Naive thymus-derived CD4-positive, alpha-beta T cell (primary cell): ENCODE measurements at regions of chr3 and their contacts with region 1.

Region 1: GRCh38 chr3:177597311-177598096 is 400.2 kb upstream of the TBL1XR1 start:
- DNase-seq: peak in 7 of 9 donors; percentile 36 to 75 (median 65)
- ATAC-seq: peak; percentile 93
- H3K4me3 ChIP-seq: peak overlapping the region; percentile 21
- H3K4me3 Mint-ChIP-seq: peak overlapping the region; percentile 51 to 80 (median 72)
- H3K27ac ChIP-seq: peak overlapping the region; percentile 54
- H3K27ac Mint-ChIP-seq: peak overlapping the region; percentile 77 to 97 (median 91)
- H3K4me1 ChIP-seq: peaks cover 39 to 50% of the 10 kb centered on the region in 2 donors
- H3K4me1 Mint-ChIP-seq: peaks cover 51 to 87% (median 83%) of the 10 kb centered on the region in 7 donors
- H3K27me3 ChIP-seq: no peaks in the 10 kb centered on the region
- H3K27me3 Mint-ChIP-seq: no peaks in the 10 kb centered on the region

Region 2: GRCh38 chr3:177057768-177058167 is 539.7 kb before region 1 on chr3:
- CTCF ChIA-PET with region 1: no interaction called
- POLR2A ChIA-PET with region 1: no interaction called
- intact Hi-C with region 1: loop called (anchors 5 kb)
- DNase-seq: peak in 7 of 9 donors; percentile 16 to 40 (median 22)
- ATAC-seq: peak; percentile 84
- H3K4me3 ChIP-seq: peak overlapping the region; percentile 23
- H3K4me3 Mint-ChIP-seq: no peak overlapping the region
- H3K27ac ChIP-seq: no peak overlapping the region
- H3K27ac Mint-ChIP-seq: no peak overlapping the region
- H3K4me1 ChIP-seq: peaks cover 10 to 20% of the 10 kb centered on the region in 2 donors
- H3K4me1 Mint-ChIP-seq: peaks cover 5 to 43% (median 31%) of the 10 kb centered on the region in 7 donors
- H3K27me3 ChIP-seq: no peaks in the 10 kb centered on the region
- H3K27me3 Mint-ChIP-seq: no peaks in the 10 kb centered on the region

Region 3: GRCh38 chr3:177426878-177427495 is 170.5 kb before region 1 on chr3:
- CTCF ChIA-PET with region 1: no interaction called
- POLR2A ChIA-PET with region 1: no interaction called
- intact Hi-C with region 1: loop called in 1 of 2 experiments (anchors 10 kb)
- DNase-seq: peak in 6 of 9 donors; percentile 5 to 50 (median 19)
- ATAC-seq: peak; percentile 88
- H3K4me3 ChIP-seq: peak overlapping the region; percentile 7
- H3K4me3 Mint-ChIP-seq: peak overlapping the region; percentile 14 to 77 (median 47)
- H3K27ac ChIP-seq: no peak overlapping the region
- H3K27ac Mint-ChIP-seq: peak overlapping the region; percentile 3 to 85 (median 52)
- H3K4me1 ChIP-seq: peaks cover 7 to 17% of the 10 kb centered on the region in 2 donors
- H3K4me1 Mint-ChIP-seq: peaks cover 13 to 38% (median 23%) of the 10 kb centered on the region in 7 donors
- H3K27me3 ChIP-seq: no peaks in the 10 kb centered on the region
- H3K27me3 Mint-ChIP-seq: peaks cover 0 to 12% (median 0%) of the 10 kb centered on the region in 5 donors

Region 4: DNA sequence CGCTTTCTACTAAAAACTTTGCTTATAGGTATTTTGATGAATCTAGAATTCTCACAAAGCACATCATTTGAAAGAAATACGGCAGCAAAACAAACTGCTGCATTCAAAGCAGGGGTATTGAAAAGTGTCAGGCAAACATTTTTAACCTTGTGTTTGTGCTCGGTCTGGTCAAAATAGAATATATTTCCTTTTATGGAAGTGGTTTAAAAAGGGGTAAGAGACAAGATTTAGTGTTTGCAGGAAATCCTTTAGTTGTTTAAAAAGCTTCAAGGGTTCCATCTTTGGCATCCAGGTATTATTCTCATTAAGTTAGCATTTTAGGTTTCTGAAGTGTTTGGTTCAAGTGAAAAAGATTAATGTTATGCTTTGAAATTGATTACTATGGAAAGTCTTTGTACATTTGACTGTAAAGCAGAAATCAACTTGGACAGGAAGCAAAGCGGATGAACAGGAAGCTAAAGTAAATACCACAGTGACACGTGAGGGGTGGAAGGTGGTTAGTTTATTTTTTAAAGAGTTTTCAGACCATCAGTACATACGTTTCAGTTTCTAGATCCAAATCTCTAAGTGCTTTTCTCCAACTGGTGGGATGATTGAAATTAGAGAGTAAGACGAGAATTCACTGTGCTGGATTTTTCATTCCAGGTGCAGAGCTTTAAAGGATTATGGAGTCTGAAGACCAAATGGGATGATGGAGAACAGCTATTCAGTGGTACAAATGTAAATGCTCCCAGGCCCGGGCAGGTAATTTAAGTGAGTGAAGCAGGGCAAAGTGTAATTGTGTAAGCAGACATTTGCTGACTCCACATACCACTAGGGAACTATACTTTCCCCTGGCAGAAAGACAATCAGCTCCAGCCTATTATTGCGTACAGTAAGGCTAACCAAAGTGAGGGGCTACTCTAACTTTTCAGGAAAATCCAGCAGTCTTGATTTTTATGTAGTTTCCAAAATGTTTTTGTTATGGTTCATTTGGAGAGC is 58.5 kb before region 1 on chr3:
- CTCF ChIA-PET with region 1: no interaction called
- POLR2A ChIA-PET with region 1: interaction called, 7 read pairs
- intact Hi-C with region 1: loop called in 1 of 2 experiments (anchors 2 kb)
- DNase-seq: peak in 6 of 9 donors; percentile 15 to 52 (median 40)
- ATAC-seq: peak; percentile 74
- H3K4me3 ChIP-seq: peak overlapping the region; percentile 32
- H3K4me3 Mint-ChIP-seq: peak overlapping the region; percentile 58 to 81 (median 78)
- H3K27ac ChIP-seq: no peak overlapping the region
- H3K27ac Mint-ChIP-seq: peak overlapping the region; percentile 70 to 84 (median 81)
- H3K4me1 ChIP-seq: peaks cover 32 to 36% of the 10 kb centered on the region in 2 donors
- H3K4me1 Mint-ChIP-seq: peaks cover 21 to 67% (median 47%) of the 10 kb centered on the region in 7 donors
- H3K27me3 ChIP-seq: no peaks in the 10 kb centered on the region
- H3K27me3 Mint-ChIP-seq: no peaks in the 10 kb centered on the region

Region 5: DNA sequence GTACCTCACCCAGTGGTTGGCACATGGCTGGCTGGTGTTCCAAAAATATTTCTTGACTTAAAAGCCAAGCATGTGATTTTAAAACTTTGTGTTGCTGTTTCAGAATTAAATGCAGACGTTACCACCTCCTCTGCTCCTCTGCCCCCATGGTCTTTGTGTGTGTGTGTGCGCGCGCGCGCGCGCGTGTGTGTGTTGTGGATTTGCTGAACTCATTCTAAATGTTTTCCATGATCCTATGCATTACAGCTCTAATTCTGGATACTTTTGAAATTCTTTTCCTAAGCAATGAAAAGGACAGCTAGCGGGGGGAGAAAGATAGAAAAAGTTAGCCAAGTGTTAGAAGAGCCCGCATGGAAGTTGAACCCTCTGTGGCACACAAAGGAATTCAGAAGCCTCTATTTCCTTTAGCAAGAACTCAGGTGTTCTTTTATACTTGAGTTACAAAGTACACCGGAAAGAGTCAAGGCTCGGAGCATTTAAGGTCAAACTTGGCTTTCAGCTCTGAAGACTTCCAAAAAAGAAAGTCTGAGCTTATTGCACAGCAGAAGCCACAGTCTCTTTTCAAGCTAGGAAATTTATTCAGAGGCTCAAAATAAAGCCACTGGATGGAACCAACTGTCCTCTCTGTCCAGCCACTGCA is 49.7 kb before region 1 on chr3:
- CTCF ChIA-PET with region 1: interaction called, 5 read pairs
- POLR2A ChIA-PET with region 1: interaction called, 3 read pairs
- intact Hi-C with region 1: loop called in 1 of 2 experiments (anchors 2 kb)
- DNase-seq: peak in 5 of 9 donors; percentile 21 to 43 (median 29)
- ATAC-seq: no peak
- H3K4me3 ChIP-seq: no peak overlapping the region
- H3K4me3 Mint-ChIP-seq: peak overlapping the region in 9 of 10 donors; percentile 19 to 65 (median 59)
- H3K27ac ChIP-seq: no peak overlapping the region
- H3K27ac Mint-ChIP-seq: peak overlapping the region in 8 of 9 donors; percentile 3 to 75 (median 62)
- H3K4me1 ChIP-seq: peaks cover 18 to 19% of the 10 kb centered on the region in 2 donors
- H3K4me1 Mint-ChIP-seq: peaks cover 16 to 84% (median 72%) of the 10 kb centered on the region in 7 donors
- H3K27me3 ChIP-seq: no peaks in the 10 kb centered on the region
- H3K27me3 Mint-ChIP-seq: no peaks in the 10 kb centered on the region

Region 6: GRCh38 chr3:177646749-177647148 is 49.2 kb after region 1 on chr3:
- CTCF ChIA-PET with region 1: no interaction called
- POLR2A ChIA-PET with region 1: interaction called, 3 read pairs
- intact Hi-C with region 1: loop called (anchors 2 to 5 kb)
- DNase-seq: peak in 4 of 9 donors; percentile 21 to 43 (median 34)
- ATAC-seq: peak; percentile 59
- H3K4me3 ChIP-seq: no peak overlapping the region
- H3K4me3 Mint-ChIP-seq: peak overlapping the region in 9 of 10 donors; percentile 21 to 78 (median 53)
- H3K27ac ChIP-seq: no peak overlapping the region
- H3K27ac Mint-ChIP-seq: peak overlapping the region in 5 of 9 donors; percentile 16 to 70 (median 51)
- H3K4me1 ChIP-seq: peaks cover 42 to 58% of the 10 kb centered on the region in 2 donors
- H3K4me1 Mint-ChIP-seq: peaks cover 39 to 68% (median 63%) of the 10 kb centered on the region in 7 donors
- H3K27me3 ChIP-seq: no peaks in the 10 kb centered on the region
- H3K27me3 Mint-ChIP-seq: no peaks in the 10 kb centered on the region

Region 7: GRCh38 chr3:177713928-177714900 is 116.7 kb after region 1 on chr3:
- CTCF ChIA-PET with region 1: no interaction called
- POLR2A ChIA-PET with region 1: no interaction called
- intact Hi-C with region 1: loop called in 1 of 2 experiments (anchors 5 kb)
- DNase-seq: no peak
- ATAC-seq: no peak
- H3K4me3 ChIP-seq: no peak overlapping the region
- H3K4me3 Mint-ChIP-seq: no peak overlapping the region
- H3K27ac ChIP-seq: no peak overlapping the region
- H3K27ac Mint-ChIP-seq: no peak overlapping the region
- H3K4me1 ChIP-seq: no peaks in the 10 kb centered on the region
- H3K4me1 Mint-ChIP-seq: no peaks in the 10 kb centered on the region
- H3K27me3 ChIP-seq: no peaks in the 10 kb centered on the region
- H3K27me3 Mint-ChIP-seq: peaks cover 0 to 2% (median 0%) of the 10 kb centered on the region in 5 donors

Region 8: DNA sequence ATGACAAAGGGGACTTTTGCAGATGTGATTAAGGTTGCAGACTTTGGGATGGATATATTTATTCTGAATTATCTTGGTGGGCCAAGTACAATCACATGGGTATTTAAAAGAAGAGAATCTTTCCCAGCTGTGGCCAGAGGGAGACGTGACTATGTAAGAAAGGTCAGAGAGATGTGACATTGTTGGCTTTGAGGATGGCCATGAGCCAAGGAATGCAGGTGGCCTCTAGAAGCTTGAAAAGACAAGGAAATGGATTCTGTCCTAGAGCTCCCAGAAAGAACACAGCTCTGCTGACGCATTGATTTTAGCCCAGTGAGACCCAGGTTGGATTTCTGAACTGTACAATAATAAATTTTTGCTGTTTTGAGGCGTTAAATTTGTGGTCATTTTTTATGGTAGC is 215.8 kb after region 1 on chr3:
- CTCF ChIA-PET with region 1: no interaction called
- POLR2A ChIA-PET with region 1: no interaction called
- intact Hi-C with region 1: no loop called
- DNase-seq: no peak
- ATAC-seq: no peak
- H3K4me3 ChIP-seq: no peak overlapping the region
- H3K4me3 Mint-ChIP-seq: no peak overlapping the region
- H3K27ac ChIP-seq: no peak overlapping the region
- H3K27ac Mint-ChIP-seq: no peak overlapping the region
- H3K4me1 ChIP-seq: peaks cover 0 to 14% of the 10 kb centered on the region in 2 donors
- H3K4me1 Mint-ChIP-seq: peaks cover 2 to 23% (median 18%) of the 10 kb centered on the region in 7 donors
- H3K27me3 ChIP-seq: no peaks in the 10 kb centered on the region
- H3K27me3 Mint-ChIP-seq: no peaks in the 10 kb centered on the region